PC-9 (cell line): ENCODE measurements at regions of chr7 and their contacts with region 1.

Region 1: GRCh38 chr7:96075510-96076349 is 246.2 kb downstream of the SLC25A13 start:
- DNase-seq: peak in 1 of 2 experiments; percentile 55
- H3K4me3 ChIP-seq: peak overlapping the region; percentile 73
- H3K27ac ChIP-seq: no peak overlapping the region
- H3K4me1 ChIP-seq: peaks cover 13% of the 10 kb centered on the region
- H3K27me3 ChIP-seq: no peaks in the 10 kb centered on the region
- CTCF ChIP-seq: peak; percentile 87

Region 2: GRCh38 chr7:96135271-96135670 is 59.5 kb after region 1 on chr7:
- CTCF ChIA-PET with region 1: no interaction called
- POLR2A ChIA-PET with region 1: no interaction called
- intact Hi-C with region 1: loop called (anchors 2 kb)
- DNase-seq: peak; percentile 49 to 97
- H3K4me3 ChIP-seq: no peak overlapping the region
- H3K27ac ChIP-seq: peak overlapping the region; percentile 77
- H3K4me1 ChIP-seq: peaks cover 30% of the 10 kb centered on the region
- H3K27me3 ChIP-seq: no peaks in the 10 kb centered on the region
- CTCF ChIP-seq: no peak

Region 3: DNA sequence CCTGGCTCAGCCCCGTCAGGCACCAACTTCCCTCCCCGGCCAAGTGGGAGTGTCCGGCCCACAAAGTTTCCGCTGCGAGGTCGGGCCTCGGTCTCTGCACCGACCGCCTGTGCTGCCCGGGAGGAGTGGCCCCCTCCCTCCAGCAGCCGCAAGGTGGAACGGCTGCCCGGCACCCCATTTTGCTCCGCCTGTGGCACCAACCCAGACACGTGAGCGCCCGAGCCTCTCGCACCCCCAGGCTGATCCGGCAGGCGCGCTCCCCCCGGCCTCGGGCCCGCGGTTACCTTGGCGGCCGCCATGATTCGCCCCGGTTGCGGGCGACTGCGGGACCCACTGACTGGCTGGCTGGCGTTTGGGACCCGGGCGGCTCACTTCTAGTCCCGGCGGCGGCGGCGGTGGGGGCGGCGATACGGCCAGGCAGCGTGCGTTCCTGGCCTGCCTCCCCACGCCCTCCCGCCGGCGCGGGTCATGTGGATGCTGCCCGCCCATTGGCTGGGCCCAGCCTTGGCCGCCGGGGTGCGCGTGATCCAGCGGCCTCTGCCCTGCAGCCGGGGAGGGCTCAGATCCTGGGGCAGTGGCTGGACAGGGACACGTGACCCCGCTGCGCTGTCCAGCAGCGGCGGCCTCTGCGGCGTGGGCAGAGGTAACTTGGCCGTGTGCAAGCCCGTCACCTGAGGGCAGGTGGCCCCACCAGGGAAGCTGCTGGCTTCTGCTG is 246.1 kb after region 1 on chr7 and contains the start of gene SLC25A13:
- CTCF ChIA-PET with region 1: no interaction called
- POLR2A ChIA-PET with region 1: no interaction called
- intact Hi-C with region 1: loop called (anchors 5 kb)
- DNase-seq: peak; percentile 82 to 96
- H3K4me3 ChIP-seq: peak within 1 kb of the TSS; percentile 74
- H3K27ac ChIP-seq: peak within 1 kb of the TSS; percentile 79
- H3K4me1 ChIP-seq: peaks cover 33% of the 10 kb centered on the region
- H3K27me3 ChIP-seq: no peaks in the 10 kb centered on the region
- CTCF ChIP-seq: no peak; the same call in 1 of the 2 replicates
- total RNA-seq, gene SLC25A13: 26.4 and 52.5 TPM in 2 replicates

Region 4: DNA sequence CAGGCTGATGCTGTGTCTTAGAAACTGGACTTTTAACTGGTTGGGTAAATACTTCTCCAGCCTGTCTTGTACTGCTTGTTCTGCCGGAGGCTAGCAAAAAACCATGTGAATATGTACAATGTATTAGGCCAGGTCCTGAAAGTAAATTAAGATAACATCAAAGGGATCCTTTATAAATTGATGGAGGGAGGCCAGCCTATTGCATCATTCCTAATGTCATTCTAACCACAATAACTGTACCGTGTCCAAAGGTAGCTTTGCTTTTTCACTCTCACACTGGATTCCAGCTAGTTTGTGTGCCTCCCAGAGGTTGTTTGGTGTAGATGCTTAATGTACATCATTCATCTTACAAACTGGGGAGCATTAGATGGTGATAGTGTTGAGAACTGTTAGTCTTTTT is 725.1 kb after region 1 on chr7:
- CTCF ChIA-PET with region 1: no interaction called
- POLR2A ChIA-PET with region 1: no interaction called
- intact Hi-C with region 1: loop called (anchors 10 kb)
- DNase-seq: peak in 1 of 2 experiments; percentile 58
- H3K4me3 ChIP-seq: no peak overlapping the region
- H3K27ac ChIP-seq: no peak overlapping the region
- H3K4me1 ChIP-seq: peaks cover 4% of the 10 kb centered on the region; the same call in 1 of the 2 replicates
- H3K27me3 ChIP-seq: no peaks in the 10 kb centered on the region
- CTCF ChIP-seq: peak; percentile 51

Region 5: DNA sequence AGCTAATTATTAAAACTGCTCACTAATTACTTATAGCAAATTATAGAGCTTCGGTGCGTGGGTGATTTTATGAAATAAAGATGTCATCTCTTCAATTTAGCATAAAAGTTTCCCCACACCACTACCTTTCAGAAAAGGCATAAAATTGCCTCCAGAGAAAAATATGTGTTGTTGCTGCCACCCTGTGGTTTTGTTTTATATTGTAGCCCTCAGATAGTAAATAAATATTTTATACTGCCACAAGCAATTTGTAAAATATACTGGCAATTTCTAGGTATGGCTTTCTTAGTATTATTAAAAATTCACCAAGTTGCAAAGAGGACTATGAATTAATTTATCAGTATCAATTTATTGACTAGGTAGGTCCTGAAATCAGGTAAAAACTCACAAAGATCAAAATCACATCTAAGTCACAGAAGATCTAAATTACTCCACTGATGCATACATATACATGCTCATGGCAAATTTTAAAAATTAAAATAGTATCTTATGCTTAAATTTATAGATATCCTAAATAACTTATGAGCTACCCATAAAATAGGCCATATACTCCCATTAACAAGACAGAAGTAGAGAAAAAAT is 1770.0 kb after region 1 on chr7:
- CTCF ChIA-PET with region 1: no interaction called
- POLR2A ChIA-PET with region 1: no interaction called
- intact Hi-C with region 1: loop called (anchors 10 kb)
- DNase-seq: no peak
- H3K4me3 ChIP-seq: no peak overlapping the region
- H3K27ac ChIP-seq: no peak overlapping the region
- H3K4me1 ChIP-seq: no peaks in the 10 kb centered on the region
- H3K27me3 ChIP-seq: peaks cover 7% of the 10 kb centered on the region
- CTCF ChIP-seq: peak; percentile 75